Endothelial cell of umbilical vein (primary cell): ENCODE measurements at regions of chr6 and their contacts with region 1.

Region 1: DNA sequence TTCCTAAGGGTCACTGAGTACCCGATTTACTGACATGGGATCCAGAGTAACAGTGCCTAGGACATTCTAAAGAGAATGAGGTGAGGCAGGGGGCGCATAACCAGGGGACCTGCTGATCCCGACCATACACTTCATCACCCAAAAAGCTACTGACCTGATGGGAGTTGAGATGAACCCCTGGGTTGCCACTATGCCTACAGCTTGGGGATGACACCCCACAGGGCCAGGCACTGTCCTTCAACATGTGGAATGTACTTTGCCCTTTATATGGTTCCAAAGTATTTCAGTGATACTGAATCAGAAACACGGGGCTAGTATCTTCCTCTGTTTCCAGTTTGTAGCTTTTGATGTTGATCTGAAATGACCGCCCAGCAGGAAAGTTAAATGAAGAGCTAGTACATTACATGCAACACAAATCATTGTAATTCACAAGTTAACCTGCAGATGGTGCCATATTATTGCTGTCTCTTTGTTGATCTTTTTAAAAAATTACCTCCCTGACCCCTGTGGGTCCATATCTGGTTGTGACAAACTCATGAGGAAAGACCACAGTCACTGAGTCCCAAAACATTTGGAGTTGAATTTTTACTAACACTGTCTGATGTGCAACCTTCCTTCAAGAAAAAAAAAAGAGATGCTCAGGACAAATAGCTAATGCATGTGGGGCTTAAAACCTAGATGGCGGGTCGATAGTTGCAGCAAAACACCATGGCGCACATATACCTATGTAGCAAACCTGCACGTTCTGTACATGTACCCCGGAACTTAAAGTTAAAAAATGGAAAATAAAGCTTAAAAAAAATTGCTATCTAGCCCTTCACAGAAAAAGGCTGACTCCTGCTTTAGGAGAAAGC is 42.7 kb upstream of the GCNT2 start:
- DNase-seq: peak; percentile 52
- H3K4me3 ChIP-seq: no peak overlapping the region
- H3K27ac ChIP-seq: no peak overlapping the region
- H3K4me1 ChIP-seq: no peaks in the 10 kb centered on the region
- H3K27me3 ChIP-seq: no peaks in the 10 kb centered on the region
- CTCF ChIP-seq: peak; percentile 35 to 42
- POLR2A ChIP-seq: no peak

Region 2: DNA sequence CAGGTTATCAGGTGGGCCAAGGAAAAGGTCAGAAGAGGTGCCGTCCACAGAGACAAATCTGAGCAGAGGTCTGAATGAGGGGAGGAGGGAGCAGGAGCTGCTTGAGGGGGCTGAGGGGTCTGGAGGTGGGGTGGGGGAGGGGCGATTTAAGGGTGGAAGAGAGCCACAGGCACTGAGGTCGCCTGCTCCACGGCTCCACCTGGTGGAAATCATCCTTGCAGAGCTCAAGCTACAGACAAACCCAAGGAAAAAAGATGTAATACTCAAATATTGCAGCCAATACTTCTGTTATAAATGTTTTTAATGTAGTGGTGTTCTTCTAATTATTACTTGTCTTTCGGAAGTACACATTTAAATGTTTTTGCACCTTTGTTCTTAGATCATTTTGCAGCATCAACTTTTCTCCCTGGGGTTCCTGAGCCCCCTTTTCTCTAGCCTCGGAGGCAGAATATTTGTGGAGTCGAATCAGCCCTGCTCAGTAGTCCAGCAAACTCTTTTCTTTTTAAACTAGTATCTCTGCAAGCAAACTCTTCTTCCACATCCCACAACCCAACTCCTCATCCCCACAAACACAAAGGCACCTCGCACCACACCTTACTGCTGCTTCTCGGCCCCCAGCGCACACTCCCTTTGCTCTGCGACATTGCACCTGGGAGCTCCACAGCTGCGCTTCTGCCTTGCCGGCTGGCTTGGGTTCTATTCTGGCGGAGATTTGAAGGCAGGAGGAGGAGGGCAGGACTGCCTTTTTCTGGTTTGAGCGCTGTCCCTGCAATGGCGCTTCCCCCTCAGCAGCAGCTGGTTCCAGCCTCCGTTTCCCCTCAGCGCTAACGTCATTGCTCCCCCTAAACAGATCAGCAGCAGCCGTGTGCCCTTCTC is 12.5 kb before region 1 on chr6:
- CTCF ChIA-PET with region 1: interaction called, 36 read pairs
- POLR2A ChIA-PET with region 1: no interaction called
- dilution Hi-C with region 1: no loop called
- intact Hi-C with region 1: no loop called
- DNase-seq: peak; percentile 39
- H3K4me3 ChIP-seq: no peak overlapping the region
- H3K27ac ChIP-seq: no peak overlapping the region
- H3K4me1 ChIP-seq: no peaks in the 10 kb centered on the region
- H3K27me3 ChIP-seq: no peaks in the 10 kb centered on the region
- CTCF ChIP-seq: peak; percentile 11 to 62
- POLR2A ChIP-seq: no peak

Region 3: GRCh38 chr6:10505529-10505928 is 27.1 kb after region 1 on chr6:
- CTCF ChIA-PET with region 1: interaction called, 10 read pairs
- POLR2A ChIA-PET with region 1: interaction called, 4 read pairs
- dilution Hi-C with region 1: no loop called
- intact Hi-C with region 1: loop called (anchors 2 kb)
- DNase-seq: no peak
- H3K4me3 ChIP-seq: no peak overlapping the region
- H3K27ac ChIP-seq: no peak overlapping the region
- H3K4me1 ChIP-seq: no peaks in the 10 kb centered on the region
- H3K27me3 ChIP-seq: peaks cover 2 to 6% of the 10 kb centered on the region in 2 experiments
- CTCF ChIP-seq: no peak
- POLR2A ChIP-seq: no peak

Region 4: GRCh38 chr6:10510592-10511367 is 32.4 kb after region 1 on chr6:
- CTCF ChIA-PET with region 1: interaction called, 10 read pairs
- POLR2A ChIA-PET with region 1: interaction called, 4 read pairs
- dilution Hi-C with region 1: no loop called
- intact Hi-C with region 1: loop called (anchors 2 kb)
- DNase-seq: peak; percentile 75
- H3K4me3 ChIP-seq: no peak overlapping the region
- H3K27ac ChIP-seq: no peak overlapping the region
- H3K4me1 ChIP-seq: no peaks in the 10 kb centered on the region
- H3K27me3 ChIP-seq: peaks cover 0 to 4% of the 10 kb centered on the region in 2 experiments
- CTCF ChIP-seq: peak; percentile 82 to 83
- POLR2A ChIP-seq: no peak

Region 5: DNA sequence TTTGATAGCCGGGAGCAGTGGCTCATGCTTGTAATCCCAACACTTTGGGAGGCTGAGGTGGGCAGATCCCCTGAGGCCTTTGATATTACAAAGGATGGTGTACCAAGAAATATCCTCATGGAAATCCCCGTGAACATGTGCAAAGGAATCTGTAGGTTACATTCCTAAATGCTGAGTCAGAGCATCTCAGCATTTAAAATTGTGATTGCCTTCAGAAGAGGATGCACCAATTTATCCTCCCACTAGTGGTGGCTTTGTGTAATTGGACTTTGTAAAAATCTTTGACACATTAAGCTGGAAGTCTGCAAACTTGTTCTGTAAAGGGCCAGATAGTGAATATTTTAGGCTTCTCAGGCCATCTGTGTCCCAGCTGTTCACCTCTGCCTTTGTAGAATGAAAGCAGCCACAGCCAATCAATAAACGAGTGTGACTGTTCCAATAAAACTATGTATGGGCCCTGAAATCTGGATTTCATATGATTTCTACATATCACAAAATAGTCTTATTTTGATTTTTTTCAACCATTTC is 281.0 kb after region 1 on chr6:
- CTCF ChIA-PET with region 1: interaction called, 17 read pairs
- POLR2A ChIA-PET with region 1: interaction called, 6 read pairs
- dilution Hi-C with region 1: no loop called
- intact Hi-C with region 1: no loop called
- DNase-seq: peak; percentile 85
- H3K4me3 ChIP-seq: no peak overlapping the region
- H3K27ac ChIP-seq: peak overlapping the region; percentile 41
- H3K4me1 ChIP-seq: peaks cover 15% of the 10 kb centered on the region
- H3K27me3 ChIP-seq: no peaks in the 10 kb centered on the region
- CTCF ChIP-seq: peak; percentile 46 to 47
- POLR2A ChIP-seq: no peak

Region 6: GRCh38 chr6:10800829-10801535 is 322.6 kb after region 1 on chr6:
- CTCF ChIA-PET with region 1: interaction called, 178 read pairs
- POLR2A ChIA-PET with region 1: no interaction called
- dilution Hi-C with region 1: no loop called
- intact Hi-C with region 1: loop called (anchors 1 kb)
- DNase-seq: peak; percentile 64
- H3K4me3 ChIP-seq: no peak overlapping the region
- H3K27ac ChIP-seq: no peak overlapping the region
- H3K4me1 ChIP-seq: peaks cover 2% of the 10 kb centered on the region
- H3K27me3 ChIP-seq: no peaks in the 10 kb centered on the region
- CTCF ChIP-seq: peak; percentile 94 to 99
- POLR2A ChIP-seq: no peak

Region 7: DNA sequence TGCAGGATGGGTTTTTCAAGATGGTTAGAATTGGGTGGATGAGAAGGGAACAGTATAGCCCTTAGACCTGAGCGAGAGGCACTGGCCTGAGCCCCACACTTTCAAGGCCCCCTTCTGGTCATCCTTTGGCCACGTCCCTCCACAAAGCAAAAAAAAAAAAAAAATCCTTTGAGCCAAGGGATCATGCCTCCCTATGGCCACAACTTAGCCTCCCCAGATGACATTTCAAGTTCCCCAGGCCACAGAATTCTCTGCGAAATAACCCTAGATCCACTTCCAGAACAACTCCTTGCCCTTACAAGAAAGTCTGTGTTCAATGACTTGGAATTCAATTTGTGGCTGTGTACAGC is 535.3 kb after region 1 on chr6:
- CTCF ChIA-PET with region 1: no interaction called
- POLR2A ChIA-PET with region 1: no interaction called
- dilution Hi-C with region 1: no loop called
- intact Hi-C with region 1: no loop called
- DNase-seq: no peak
- H3K4me3 ChIP-seq: no peak overlapping the region
- H3K27ac ChIP-seq: no peak overlapping the region
- H3K4me1 ChIP-seq: peaks cover 6% of the 10 kb centered on the region
- H3K27me3 ChIP-seq: peaks cover 4 to 7% of the 10 kb centered on the region in 2 experiments
- CTCF ChIP-seq: no peak
- POLR2A ChIP-seq: no peak

Region 8: DNA sequence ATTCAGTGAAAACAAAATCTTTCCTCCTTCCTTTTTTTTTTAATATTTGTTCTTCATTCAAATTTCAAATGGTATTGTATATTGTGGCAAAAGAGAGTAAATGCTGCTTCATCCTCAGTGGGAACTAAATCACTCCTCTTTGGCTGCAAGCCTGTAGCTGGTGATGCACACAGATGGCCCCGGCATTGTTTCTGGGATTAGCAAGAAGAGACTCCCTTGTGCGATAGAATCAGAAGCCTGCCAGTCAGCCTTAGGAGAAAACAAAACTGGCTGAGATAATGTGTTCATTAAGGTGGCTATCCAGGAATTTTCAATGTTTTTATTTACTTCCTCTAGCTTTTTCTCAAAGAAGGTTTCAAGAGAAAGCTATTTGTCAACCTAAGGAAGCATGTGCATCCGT is 586.4 kb after region 1 on chr6:
- CTCF ChIA-PET with region 1: interaction called, 95 read pairs
- POLR2A ChIA-PET with region 1: no interaction called
- dilution Hi-C with region 1: no loop called
- intact Hi-C with region 1: no loop called
- DNase-seq: no peak
- H3K4me3 ChIP-seq: no peak overlapping the region
- H3K27ac ChIP-seq: no peak overlapping the region
- H3K4me1 ChIP-seq: no peaks in the 10 kb centered on the region
- H3K27me3 ChIP-seq: peaks cover 0 to 3% of the 10 kb centered on the region in 2 experiments
- CTCF ChIP-seq: no peak
- POLR2A ChIP-seq: no peak